H1 (cell line): ENCODE measurements at regions of chr7 and their contacts with region 1.

Region 1: GRCh38 chr7:143416565-143417149 is 8.0 kb upstream of the EPHA1 start:
- DNase-seq: no peak
- H3K4me3 ChIP-seq: no peak overlapping the region
- H3K27ac ChIP-seq: no peak overlapping the region
- H3K4me1 ChIP-seq: peaks cover 3 to 8% (median 6%) of the 10 kb centered on the region in 4 experiments; a peak in 6 of 7 replicates
- H3K27me3 ChIP-seq: no peaks in the 10 kb centered on the region
- CTCF ChIP-seq: peak in 2 of 3 experiments; percentile 45 to 48; a peak in 3 of 4 replicates
- EP300 ChIP-seq: no peak
- POLR2A ChIP-seq: no peak
- RAD21 ChIP-seq: peak; percentile 50 to 56

Region 2: DNA sequence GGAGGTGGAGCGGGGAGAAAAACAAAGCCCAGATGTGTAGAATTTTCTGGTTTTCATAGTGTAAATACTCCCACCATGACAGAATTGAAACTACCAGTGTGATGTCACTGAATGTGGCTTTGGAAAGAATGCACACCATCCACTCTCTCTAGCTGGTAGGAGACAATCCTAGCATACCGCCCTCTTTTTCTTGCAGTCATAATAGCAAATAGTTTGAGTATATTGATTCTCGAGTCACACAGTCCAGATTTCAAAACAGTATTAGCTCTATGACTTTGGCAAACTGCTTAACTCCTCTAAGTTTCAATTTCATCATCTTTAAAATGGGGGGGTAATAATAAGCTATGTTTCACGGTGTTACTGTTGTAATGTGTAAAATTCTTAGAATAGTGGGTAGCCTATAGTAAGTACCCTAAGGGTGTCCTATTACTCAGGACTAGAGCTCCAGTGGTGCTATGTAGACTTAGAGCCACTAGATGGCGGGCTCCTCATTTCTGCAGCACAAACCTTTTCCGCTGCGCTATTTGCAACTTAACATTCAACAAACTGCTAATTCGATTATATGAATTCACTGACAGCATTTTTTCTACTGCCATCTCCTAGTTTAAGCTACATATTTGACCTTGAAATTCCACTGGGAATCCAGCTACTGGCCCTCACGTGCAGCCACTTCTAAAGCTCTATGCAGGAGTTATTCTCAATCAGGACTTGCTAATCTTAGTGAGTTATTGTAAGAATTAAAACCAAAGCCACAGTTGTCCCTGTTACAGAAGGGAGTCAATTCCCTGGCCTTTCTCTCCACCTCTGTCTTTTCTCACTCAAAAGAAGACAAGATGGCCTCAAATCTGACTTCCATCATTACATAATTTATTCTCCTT is 176.1 kb before region 1 on chr7:
- CTCF ChIA-PET with region 1: interaction called, 17 read pairs
- POLR2A ChIA-PET with region 1: no interaction called
- DNase-seq: peak in 1 of 2 experiments; percentile 58
- H3K4me3 ChIP-seq: no peak overlapping the region
- H3K27ac ChIP-seq: no peak overlapping the region
- H3K4me1 ChIP-seq: no peaks in the 10 kb centered on the region
- H3K27me3 ChIP-seq: no peaks in the 10 kb centered on the region; a peak in 1 of 7 replicates
- CTCF ChIP-seq: peak; percentile 15 to 85 (median 83)
- EP300 ChIP-seq: no peak
- POLR2A ChIP-seq: no peak
- RAD21 ChIP-seq: peak; percentile 87 to 92

Region 3: DNA sequence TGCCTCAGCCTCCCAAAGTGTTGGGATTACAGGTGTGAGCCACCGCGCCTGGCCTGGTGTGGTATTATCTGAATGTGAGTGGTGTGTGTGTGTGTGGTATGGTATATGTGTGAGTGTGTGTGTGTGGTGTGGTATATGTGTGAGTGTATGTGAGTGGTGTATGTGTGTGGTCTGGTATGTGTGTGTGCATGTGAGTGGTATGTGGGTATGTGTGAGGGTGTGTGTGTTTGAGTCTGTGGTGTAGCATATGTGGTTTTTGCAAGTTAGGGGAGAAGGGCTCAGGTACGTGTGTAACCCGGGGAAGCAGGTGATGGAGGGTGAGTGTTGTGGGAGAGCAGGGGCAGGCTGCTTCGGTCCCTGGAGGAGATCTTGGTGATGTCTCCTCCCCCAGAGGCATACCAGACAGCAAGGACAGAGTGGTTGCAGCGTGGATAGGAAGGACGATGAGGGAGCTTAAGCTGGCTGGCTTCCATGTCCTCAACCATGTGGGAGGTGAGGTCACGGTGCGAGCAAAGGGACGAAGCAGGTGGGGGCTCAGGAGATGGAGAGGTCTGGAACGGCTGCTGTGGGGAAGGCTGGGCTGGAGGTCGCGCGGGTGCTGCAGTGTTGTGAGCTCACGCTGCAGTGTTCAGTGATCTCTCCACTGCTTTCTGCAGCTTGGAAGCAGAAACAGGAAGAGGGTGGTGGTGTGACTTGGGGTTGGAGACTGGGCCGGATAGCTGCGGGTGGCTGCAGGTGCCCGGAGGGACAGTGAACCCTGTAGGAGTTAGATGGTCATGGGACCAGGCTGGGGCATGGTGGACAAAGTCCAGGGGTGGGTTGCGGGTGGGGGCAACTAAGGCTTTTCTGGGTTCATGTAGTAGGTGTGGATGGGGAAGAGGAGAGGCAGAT is 30.5 kb before region 1 on chr7:
- CTCF ChIA-PET with region 1: interaction called, 242 read pairs
- POLR2A ChIA-PET with region 1: interaction called, 518 read pairs
- DNase-seq: no peak
- H3K4me3 ChIP-seq: no peak overlapping the region
- H3K27ac ChIP-seq: peak overlapping the region; percentile 22; the same call in 1 of the 2 replicates
- H3K4me1 ChIP-seq: peaks cover 2 to 18% (median 4%) of the 10 kb centered on the region in 4 experiments; a peak in 6 of 7 replicates
- H3K27me3 ChIP-seq: no peaks in the 10 kb centered on the region
- CTCF ChIP-seq: no peak
- EP300 ChIP-seq: no peak
- POLR2A ChIP-seq: no peak; a peak in 1 of 3 replicates
- RAD21 ChIP-seq: no peak

Region 4: DNA sequence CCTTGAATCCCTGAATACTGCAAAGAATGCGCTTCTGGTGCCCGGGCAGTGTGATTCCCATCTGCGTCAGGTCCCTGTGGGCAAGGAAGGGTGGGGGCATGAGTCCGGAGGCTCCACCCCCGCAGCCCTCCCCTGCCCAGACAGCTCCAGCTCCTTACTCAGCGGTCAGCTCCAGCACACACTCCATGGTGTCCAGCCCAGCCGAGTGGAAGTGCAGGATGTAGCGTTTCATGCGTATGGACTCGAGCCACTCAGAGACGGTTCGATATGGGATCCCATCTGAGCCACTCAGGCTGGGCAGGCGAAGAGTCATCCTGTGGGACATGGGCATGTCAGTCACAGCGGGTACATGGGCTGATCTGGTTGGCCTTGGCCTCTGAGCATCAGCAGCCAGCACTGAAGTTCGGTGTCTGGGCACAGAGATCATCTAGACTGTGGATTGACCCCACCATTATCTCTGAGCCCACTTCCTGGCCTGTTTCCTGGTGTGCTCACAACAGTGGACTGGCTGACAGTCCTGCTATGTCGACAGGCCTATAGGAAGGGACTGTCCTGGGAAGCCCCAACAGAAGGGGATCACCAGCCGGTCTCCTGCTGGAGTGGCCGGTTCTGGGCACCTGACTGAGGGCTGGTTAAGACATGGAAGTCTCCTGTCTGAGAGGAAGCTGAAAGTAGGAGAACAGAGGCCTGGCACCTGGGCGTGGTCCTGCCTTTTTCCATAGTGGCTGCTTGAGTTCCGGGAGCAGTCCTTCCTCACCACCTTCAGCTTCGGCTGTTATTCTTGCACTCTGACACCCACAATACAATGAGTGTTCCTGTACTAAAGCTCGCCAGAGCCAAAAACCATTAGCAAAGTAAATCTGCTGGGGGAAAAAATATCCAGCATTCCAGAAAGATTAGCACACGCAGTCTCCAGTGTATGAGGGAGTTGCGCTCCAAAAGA is 24.9 kb before region 1 on chr7:
- CTCF ChIA-PET with region 1: interaction called, 242 read pairs
- POLR2A ChIA-PET with region 1: interaction called, 518 read pairs
- DNase-seq: no peak
- H3K4me3 ChIP-seq: no peak overlapping the region
- H3K27ac ChIP-seq: no peak overlapping the region
- H3K4me1 ChIP-seq: no peaks in the 10 kb centered on the region; a peak in 1 of 7 replicates
- H3K27me3 ChIP-seq: no peaks in the 10 kb centered on the region
- CTCF ChIP-seq: no peak
- EP300 ChIP-seq: no peak
- POLR2A ChIP-seq: no peak
- RAD21 ChIP-seq: no peak

Region 5: DNA sequence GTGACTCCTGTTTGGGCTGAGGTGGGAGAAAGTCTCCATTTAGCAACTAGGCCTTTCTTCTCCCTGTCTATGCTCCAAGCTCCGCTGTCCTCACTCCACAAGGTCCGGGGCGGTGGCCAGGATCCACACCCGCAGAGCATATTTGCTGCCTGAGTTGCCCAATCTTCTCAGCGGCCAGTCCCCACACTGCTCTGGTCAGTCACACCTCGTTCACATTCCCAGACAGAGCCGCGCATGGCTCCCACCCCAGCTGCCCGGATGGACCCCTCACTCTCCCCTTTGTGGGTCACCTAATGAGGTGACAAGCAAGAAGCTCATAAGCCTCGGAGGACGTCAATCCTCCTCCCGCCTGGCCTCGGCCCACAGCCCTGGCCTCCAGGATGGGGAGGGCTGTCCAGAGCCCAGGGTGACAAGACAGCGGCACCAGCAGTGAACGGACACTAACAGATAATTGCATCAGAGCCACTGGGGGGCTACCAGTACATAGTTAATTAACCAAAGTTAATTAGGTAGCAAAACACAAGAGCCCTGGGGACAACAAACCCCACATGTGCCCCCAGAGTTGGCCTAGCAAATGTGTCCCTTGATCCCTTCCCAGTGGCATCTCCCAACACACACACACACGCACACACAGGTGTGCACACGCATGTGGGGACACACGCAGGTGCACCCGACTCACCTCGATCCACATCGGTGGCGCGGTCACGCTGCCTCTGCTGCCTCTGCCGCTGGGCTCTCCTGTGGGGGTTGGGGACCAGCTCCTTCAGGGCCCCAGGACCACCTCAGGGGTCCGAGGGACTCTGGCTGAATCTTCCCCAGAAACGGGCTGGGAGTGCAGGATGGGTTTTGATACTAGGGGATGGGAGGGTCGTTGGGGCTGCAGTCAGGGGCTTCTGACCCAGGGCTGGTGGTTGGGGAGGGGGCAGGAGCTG is 19.8 kb before region 1 on chr7:
- CTCF ChIA-PET with region 1: interaction called, 242 read pairs
- POLR2A ChIA-PET with region 1: interaction called, 10 read pairs
- DNase-seq: no peak
- H3K4me3 ChIP-seq: no peak overlapping the region
- H3K27ac ChIP-seq: no peak overlapping the region
- H3K4me1 ChIP-seq: no peaks in the 10 kb centered on the region
- H3K27me3 ChIP-seq: no peaks in the 10 kb centered on the region
- CTCF ChIP-seq: no peak
- EP300 ChIP-seq: no peak
- POLR2A ChIP-seq: no peak
- RAD21 ChIP-seq: no peak

Region 6: DNA sequence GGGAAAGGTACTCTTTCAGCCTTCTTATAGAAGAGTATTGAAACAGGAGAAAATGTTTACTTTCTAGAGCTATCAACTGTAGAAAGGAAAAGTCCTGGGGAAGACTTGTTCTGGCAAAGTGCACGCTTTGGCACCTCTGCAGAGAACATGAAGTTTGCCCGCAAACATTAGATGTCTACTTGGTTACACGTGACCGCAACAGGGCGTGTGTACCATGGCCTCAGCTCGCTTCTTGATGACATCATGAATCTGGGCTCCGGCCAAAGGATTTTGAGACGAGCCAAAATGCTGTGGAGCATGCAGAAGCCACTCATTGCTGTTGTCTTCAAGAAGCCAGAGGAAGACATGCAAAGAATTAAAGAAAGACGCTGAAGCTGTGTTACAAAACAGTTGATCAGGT is 18.0 kb after region 1 on chr7:
- CTCF ChIA-PET with region 1: interaction called, 23 read pairs
- POLR2A ChIA-PET with region 1: no interaction called
- DNase-seq: no peak
- H3K4me3 ChIP-seq: no peak overlapping the region
- H3K27ac ChIP-seq: no peak overlapping the region
- H3K4me1 ChIP-seq: peaks cover 2 to 8% (median 6%) of the 10 kb centered on the region in 4 experiments
- H3K27me3 ChIP-seq: no peaks in the 10 kb centered on the region
- CTCF ChIP-seq: no peak
- EP300 ChIP-seq: no peak
- POLR2A ChIP-seq: no peak
- RAD21 ChIP-seq: no peak